Transverse colon (tissue), 4 donors: ENCODE measurements at regions of chr9 and their contacts with region 1.

Region 1: GRCh38 chr9:114653556-114654159 is 3.9 kb downstream of the TEX53 start:
- DNase-seq: peak; percentile 84
- H3K4me3 ChIP-seq: no peak overlapping the region
- H3K27ac ChIP-seq: no peak overlapping the region
- H3K4me1 ChIP-seq: peaks cover 0 to 7% (median 0%) of the 10 kb centered on the region in 4 donors
- H3K27me3 ChIP-seq: no peaks in the 10 kb centered on the region
- CTCF ChIP-seq: peak; percentile 88 to 93 (median 91)
- EP300 ChIP-seq: no peak
- POLR2A ChIP-seq: no peak

Region 2: DNA sequence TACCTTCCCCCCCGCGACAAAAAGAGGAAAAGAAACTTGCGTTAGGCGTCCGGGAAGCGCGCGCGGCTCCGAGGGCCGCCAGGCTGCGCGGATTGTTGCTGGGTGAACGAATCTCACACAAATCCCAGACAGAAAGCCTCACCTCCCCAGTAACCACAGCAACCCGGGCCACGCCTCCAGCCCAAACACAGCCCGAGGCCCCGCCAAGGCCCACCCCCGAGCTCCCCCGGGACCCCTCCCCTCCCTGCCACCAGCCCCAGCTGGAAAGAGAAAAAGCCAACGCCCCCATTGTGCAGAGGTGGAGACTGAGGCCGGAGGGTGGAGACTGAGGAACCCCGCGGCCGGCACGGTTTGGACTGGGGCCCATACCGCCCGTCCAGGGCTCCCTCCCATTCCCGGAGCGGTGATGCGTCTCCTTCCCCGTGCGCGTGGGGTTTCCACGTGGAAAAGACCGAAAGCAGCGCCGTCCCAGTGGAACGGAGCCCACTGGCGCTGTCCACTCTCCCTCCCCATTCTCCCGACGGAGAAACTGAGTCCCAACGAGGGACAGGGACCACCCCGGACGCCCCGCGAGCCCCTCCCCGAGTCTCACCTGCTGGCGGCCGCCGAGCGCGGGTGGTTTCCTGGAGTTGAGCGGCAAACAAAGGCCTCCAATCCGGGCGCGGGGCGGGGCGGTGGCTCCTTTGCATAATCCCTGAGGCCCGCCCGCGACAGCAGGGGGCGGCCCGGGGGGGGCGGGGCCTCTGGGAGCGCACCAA is 255.6 kb before region 1 on chr9:
- in situ Hi-C with region 1: loop called in 2 of 4 experiments (anchors 10 to 25 kb)
- intact Hi-C with region 1: loop called (anchors 5 kb)
- DNase-seq: peak; percentile 99
- H3K4me3 ChIP-seq: peak overlapping the region; percentile 49 to 80 (median 68)
- H3K27ac ChIP-seq: peak overlapping the region; percentile 90 to 92 (median 91)
- H3K4me1 ChIP-seq: peaks cover 13 to 62% (median 44%) of the 10 kb centered on the region in 4 donors
- H3K27me3 ChIP-seq: no peaks in the 10 kb centered on the region
- CTCF ChIP-seq: peak in 2 of 5 experiments; percentile 31 to 38
- EP300 ChIP-seq: no peak
- POLR2A ChIP-seq: peak; percentile 92

Region 3: GRCh38 chr9:114405294-114406034 is 248.2 kb before region 1 on chr9:
- in situ Hi-C with region 1: loop called (anchors 10 to 25 kb)
- intact Hi-C with region 1: loop called (anchors 5 kb)
- DNase-seq: peak; percentile 85
- H3K4me3 ChIP-seq: no peak overlapping the region
- H3K27ac ChIP-seq: no peak overlapping the region
- H3K4me1 ChIP-seq: peaks cover 0 to 12% (median 5%) of the 10 kb centered on the region in 4 donors
- H3K27me3 ChIP-seq: no peaks in the 10 kb centered on the region
- CTCF ChIP-seq: peak; percentile 76 to 87 (median 83)
- EP300 ChIP-seq: no peak
- POLR2A ChIP-seq: no peak

Region 4: GRCh38 chr9:114413861-114414301 is 239.8 kb before region 1 on chr9:
- in situ Hi-C with region 1: loop called (anchors 10 to 25 kb)
- intact Hi-C with region 1: no loop called
- DNase-seq: no peak
- H3K4me3 ChIP-seq: no peak overlapping the region
- H3K27ac ChIP-seq: peak overlapping the region in 2 of 4 donors; percentile 4 to 43
- H3K4me1 ChIP-seq: peaks cover 0 to 9% (median 0%) of the 10 kb centered on the region in 4 donors
- H3K27me3 ChIP-seq: no peaks in the 10 kb centered on the region
- CTCF ChIP-seq: no peak
- EP300 ChIP-seq: no peak
- POLR2A ChIP-seq: no peak

Region 5: DNA sequence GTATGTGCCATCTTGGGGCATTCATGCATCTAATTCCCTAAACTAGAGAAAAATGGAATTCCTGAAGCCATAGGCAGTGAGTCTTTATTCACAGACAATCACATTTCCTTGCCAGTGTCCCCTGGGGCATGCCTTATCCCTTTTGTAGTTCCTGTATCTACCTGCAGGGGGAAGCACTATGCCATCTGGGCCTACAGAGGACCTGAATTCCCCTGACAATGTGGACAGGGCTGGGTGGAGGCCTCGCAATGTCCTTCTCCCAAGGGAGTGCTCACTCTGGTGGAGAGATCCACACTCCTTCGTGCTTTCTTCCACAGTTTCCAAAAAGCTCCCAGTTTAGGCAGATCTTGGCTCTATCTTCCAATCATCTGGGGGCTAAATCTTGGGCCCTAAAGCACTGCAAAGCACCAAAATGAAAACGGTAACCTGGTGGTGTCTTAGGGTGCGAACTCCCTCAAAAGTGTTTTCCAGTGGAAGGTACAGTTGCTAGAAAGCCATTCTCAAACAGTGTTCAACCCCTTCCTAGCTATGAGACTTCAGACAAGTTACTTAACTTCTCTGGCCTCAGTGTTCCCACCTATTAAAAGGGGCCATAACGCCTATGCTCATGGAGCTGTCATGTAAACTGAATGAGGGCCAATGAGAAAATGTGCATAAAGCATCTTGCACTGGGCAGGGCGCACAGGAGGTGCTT is 165.9 kb before region 1 on chr9:
- in situ Hi-C with region 1: loop called (anchors 5 to 25 kb)
- intact Hi-C with region 1: loop called (anchors 10 kb)
- DNase-seq: peak; percentile 73
- H3K4me3 ChIP-seq: no peak overlapping the region
- H3K27ac ChIP-seq: no peak overlapping the region
- H3K4me1 ChIP-seq: peaks cover 0 to 3% (median 0%) of the 10 kb centered on the region in 4 donors
- H3K27me3 ChIP-seq: no peaks in the 10 kb centered on the region
- CTCF ChIP-seq: peak; percentile 85 to 93 (median 90)
- EP300 ChIP-seq: no peak
- POLR2A ChIP-seq: no peak

Region 6: GRCh38 chr9:114499528-114499927 is 154.1 kb before region 1 on chr9:
- in situ Hi-C with region 1: loop called in 2 of 4 experiments (anchors 10 to 25 kb)
- intact Hi-C with region 1: no loop called
- DNase-seq: no peak
- H3K4me3 ChIP-seq: no peak overlapping the region
- H3K27ac ChIP-seq: no peak overlapping the region
- H3K4me1 ChIP-seq: peaks cover 5 to 22% (median 14%) of the 10 kb centered on the region in 4 donors
- H3K27me3 ChIP-seq: no peaks in the 10 kb centered on the region
- CTCF ChIP-seq: no peak
- EP300 ChIP-seq: no peak
- POLR2A ChIP-seq: no peak

Region 7: DNA sequence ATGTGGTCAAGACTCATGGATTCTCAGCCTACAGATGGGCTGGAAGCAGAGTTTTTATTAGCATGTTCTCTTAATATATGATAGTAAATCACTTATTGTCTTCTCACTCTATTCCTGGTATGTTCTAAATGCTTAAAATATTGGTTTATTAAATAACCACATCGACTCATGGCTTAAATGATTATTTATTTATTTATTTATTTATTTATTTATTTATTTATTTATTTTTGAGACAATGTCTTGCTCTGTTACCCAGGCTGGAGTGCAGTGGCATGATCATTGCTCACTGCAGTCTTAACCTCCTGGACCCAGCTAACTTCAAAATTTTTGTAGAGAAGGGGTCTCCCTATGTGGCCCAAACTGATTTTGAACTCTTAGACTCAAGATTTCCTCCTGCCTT is 921.5 kb after region 1 on chr9:
- in situ Hi-C with region 1: no loop called
- intact Hi-C with region 1: no loop called
- DNase-seq: no peak
- H3K4me3 ChIP-seq: no peak overlapping the region
- H3K27ac ChIP-seq: no peak overlapping the region
- H3K4me1 ChIP-seq: no peaks in the 10 kb centered on the region
- H3K27me3 ChIP-seq: no peaks in the 10 kb centered on the region
- CTCF ChIP-seq: no peak
- EP300 ChIP-seq: no peak
- POLR2A ChIP-seq: no peak